Right cardiac atrium (tissue), 5 donors: ENCODE measurements at regions of chr2 and their contacts with region 1.

Region 1: GRCh38 chr2:200901459-200902072 is 12.4 kb downstream of the NIF3L1 start:
- DNase-seq: peak in 2 of 3 donors; percentile 32 to 59
- ATAC-seq: peak; percentile 84 to 87
- H3K4me3 ChIP-seq: no peak overlapping the region
- H3K27ac ChIP-seq: no peak overlapping the region
- H3K4me1 ChIP-seq: no peaks in the 10 kb centered on the region
- H3K27me3 ChIP-seq: no peaks in the 10 kb centered on the region

Region 2: DNA sequence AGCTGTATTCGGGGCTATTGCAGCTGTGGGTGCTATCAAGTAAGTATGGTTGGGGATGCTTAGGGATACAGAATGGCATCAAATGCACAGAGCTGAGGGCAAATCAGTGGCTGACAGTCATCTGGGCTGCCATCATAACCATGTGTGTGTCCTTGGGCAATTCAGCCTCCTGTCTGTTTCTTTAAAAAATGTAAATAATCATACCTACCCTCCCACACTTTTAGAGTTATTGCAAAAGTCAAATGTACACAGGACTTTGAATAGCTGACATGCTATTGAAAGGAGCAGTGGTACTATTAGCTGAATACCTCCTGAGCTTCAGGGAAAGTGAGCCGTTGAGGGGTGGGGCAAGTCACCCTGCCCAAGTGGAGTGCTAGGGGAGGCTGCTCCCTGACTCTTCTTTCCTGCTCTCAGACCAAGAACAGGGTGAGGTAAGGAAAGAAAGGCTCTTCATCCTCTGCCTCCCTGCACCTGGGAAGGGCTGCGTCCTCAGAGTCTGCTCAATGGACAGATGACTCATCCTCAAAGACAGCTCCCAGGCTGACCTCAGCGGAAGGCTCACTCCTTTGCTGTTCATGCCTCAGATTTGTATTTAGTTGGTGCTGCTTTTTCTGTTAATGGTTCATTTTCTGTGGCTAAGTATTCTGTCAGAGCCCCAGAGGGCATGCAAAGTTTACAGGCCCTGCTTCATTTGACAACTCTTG is 144.8 kb before region 1 on chr2:
- intact Hi-C with region 1: no loop called
- DNase-seq: no peak
- ATAC-seq: no peak
- H3K4me3 ChIP-seq: no peak overlapping the region
- H3K27ac ChIP-seq: no peak overlapping the region
- H3K4me1 ChIP-seq: no peaks in the 10 kb centered on the region
- H3K27me3 ChIP-seq: no peaks in the 10 kb centered on the region

Region 3: DNA sequence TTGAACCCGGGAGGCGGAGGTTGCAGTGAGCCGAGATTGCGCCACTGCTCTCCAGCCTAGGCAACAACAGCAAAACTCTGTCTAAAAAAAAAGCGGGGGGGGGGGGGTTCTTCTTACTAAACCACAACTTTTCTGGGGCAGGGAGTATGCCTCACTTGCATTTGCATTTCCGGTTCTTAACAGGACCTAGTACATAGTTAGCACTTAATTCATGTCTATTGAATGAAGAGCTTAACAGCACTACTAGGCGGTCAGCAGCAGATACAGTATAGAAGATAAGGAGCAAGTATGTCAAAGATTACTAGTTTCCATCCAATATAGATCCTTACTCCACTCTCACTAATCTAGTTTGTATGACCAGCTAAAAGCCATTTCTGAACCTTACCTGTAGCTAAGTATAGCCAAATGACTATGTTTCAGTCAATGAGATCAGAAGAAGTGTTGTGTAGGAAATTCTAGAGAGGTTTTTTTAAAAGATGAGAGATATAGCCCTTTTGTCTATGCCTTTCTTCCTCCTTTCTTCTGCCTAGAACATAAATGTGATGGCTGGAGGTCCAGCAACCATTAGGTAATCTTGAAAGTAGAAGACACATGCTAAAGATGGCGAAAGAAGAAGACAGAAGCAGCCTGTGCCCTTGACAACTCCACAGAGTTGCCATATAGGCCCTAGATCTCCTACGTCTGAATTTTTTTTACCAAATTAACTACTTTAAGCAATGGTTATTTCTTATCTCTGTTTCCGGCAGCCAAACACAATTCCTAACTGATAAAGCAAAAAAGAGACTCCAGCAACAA is 158.6 kb after region 1 on chr2:
- intact Hi-C with region 1: loop called in 1 of 4 experiments (anchors 5 kb)
- DNase-seq: no peak
- ATAC-seq: no peak
- H3K4me3 ChIP-seq: no peak overlapping the region
- H3K27ac ChIP-seq: no peak overlapping the region
- H3K4me1 ChIP-seq: peaks cover 3% of the 10 kb centered on the region
- H3K27me3 ChIP-seq: no peaks in the 10 kb centered on the region

Region 4: DNA sequence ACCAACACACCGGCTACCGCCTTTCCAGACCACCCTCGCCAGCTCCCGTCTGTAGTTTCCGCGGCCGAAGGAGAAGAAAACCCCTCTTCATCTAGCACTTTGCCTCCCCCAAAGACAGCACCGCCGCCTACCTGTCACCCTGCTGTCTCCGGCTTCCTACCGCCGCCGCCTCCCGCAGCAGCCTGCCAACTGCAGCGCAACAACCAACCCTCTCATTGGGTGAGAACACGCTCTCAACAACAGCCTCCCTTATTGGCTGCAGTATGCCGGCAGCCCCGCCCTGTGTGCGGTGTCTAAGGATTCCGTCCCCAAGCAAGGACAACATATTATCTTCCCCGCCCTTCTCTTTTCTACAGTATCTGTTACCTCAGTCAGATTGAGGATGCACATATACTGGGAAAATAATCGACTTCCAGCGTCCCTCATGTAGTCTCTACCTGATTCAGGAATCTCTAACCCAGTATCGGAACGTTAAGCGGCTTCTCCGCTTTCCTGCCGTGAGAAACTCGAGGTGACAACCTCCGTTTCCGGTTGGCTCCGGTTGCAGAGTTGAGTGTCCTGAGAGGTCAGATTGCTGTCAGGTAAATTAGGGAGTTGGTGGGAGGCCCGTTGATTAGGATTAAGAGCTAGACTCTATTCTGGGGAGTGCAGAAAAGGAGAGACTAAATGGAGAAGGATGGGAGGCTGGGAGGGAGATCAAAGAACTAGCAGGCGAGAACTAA is 170.1 kb after region 1 on chr2 and contains the starts of genes HYCC2 and NDUFB3:
- intact Hi-C with region 1: loop called in 2 of 4 experiments (anchors 5 kb)
- DNase-seq: peak; percentile 89 to 96 (median 95)
- ATAC-seq: peak; percentile 99 to 100
- H3K4me3 ChIP-seq: peak within 1 kb of the TSS; percentile 87
- H3K27ac ChIP-seq: peak within 1 kb of the TSS; percentile 80
- H3K4me1 ChIP-seq: no peaks in the 10 kb centered on the region
- H3K27me3 ChIP-seq: no peaks in the 10 kb centered on the region
- total RNA-seq, gene HYCC2: 9.7 to 17.2 (median 13.4) TPM
- total RNA-seq, gene NDUFB3: 296 to 384 (median 313) TPM

Region 5: GRCh38 chr2:201176081-201176481 is 274.5 kb after region 1 on chr2:
- intact Hi-C with region 1: loop called (anchors 5 kb)
- DNase-seq: no peak
- ATAC-seq: no peak
- H3K4me3 ChIP-seq: no peak overlapping the region
- H3K27ac ChIP-seq: no peak overlapping the region
- H3K4me1 ChIP-seq: no peaks in the 10 kb centered on the region
- H3K27me3 ChIP-seq: no peaks in the 10 kb centered on the region